ENCODE measurements at regions of chr17 and their contacts with region 1.

Region 1: GRCh38 chr17:40303009-40303657 is 5.8 kb upstream of the RARA start:
- DNase-seq: peak; percentile 54
- H3K27ac ChIP-seq: no peak overlapping the region
- CTCF ChIP-seq: peak; percentile 76

Region 2: DNA sequence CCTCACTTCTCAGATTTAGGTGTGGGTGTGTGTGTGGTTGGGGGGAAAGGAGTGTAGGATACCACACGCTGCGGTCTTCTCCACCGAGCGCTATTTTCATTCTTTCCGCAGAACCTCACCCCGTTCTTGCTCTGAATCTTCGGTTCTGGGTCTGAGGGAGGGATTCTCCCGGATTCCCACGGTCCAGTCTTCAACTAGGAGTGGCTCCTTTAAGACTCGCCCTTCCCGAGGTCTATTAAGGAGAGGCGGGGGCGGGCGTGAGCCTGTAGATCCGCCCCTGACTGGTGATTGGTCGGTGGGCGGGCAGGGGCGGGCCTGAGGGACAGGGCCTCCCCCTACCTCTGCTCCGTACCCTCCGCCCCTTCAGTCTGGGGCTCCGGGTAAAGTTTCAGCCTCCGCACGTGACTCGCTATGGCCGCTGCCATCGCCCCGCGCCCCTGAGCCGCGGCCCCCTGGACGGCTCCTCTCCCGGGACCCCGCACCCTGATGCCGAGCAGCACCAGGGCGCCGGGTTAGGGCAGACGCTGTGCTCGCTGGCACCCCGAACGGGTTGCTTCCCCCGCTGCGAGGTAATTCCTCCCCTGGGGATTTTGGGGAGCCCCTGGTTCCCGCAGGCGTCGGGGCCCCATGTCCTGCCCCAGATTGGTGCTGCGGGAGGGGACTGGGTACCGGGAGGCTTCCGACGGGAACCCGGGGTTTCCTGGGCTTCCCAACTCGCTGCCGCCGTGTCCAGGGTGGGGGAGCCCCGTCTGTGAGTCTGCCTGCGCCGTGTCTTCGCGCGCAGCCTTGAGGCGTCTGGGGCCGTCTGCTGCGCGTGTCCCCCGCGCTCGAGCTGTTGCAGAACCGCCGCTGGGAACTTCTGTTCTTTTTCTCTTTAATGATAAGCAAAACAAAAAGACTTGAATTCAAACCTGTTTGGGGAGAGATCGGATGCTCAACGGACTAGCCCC is 15.0 kb after region 1 on chr17:
- CTCF ChIA-PET with region 1: interaction called, 13 read pairs
- POLR2A ChIA-PET with region 1: interaction called, 3 read pairs
- DNase-seq: peak; percentile 99
- H3K27ac ChIP-seq: peak overlapping the region; percentile 99
- CTCF ChIP-seq: no peak

Region 3: GRCh38 chr17:40355123-40355803 is 52.1 kb after region 1 on chr17:
- CTCF ChIA-PET with region 1: interaction called, 36 read pairs
- POLR2A ChIA-PET with region 1: interaction called, 3 read pairs
- DNase-seq: peak; percentile 55
- H3K27ac ChIP-seq: peak overlapping the region; percentile 96
- CTCF ChIP-seq: peak; percentile 90